PC-3 (cell line): ENCODE measurements at regions of chr4 and their contacts with region 1.

Region 1: DNA sequence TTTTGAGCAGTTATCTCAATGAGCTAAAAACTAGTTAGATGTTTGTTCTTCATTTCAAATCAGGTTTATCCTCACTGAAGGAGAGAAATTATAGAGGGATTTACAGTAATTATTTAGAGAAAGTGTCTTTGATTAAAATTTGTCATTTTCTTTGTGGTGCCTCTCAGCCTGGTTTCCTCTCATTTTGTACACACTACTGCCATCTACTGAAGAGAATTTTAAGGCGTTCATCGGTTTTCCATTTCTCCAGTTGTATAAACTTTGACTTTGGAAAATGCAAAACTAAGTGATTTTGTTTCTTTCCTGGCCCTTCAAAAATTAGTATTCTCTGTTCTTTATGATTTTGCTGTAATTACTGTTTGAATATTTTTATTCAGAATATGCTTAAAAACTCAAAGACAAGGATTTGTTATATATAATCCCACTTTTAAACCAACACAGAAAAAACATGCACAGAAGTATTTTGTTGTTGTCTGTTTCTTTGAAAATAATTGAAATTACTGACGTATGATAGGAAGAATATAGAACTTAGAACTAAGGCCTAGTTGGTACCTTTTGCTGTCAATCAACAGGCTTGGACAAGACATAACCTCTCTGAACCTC is 34.4 kb upstream of the ANXA3 start:
- DNase-seq: peak; percentile 61
- ATAC-seq: no peak; the same call in 1 of the 2 replicates
- H3K4me3 ChIP-seq: no peak overlapping the region
- H3K27ac ChIP-seq: no peak overlapping the region
- H3K4me1 ChIP-seq: no peaks in the 10 kb centered on the region
- H3K27me3 ChIP-seq: no peaks in the 10 kb centered on the region
- CTCF ChIP-seq: peak; percentile 70

Region 2: GRCh38 chr4:77959566-77960338 is 557.4 kb before region 1 on chr4:
- CTCF ChIA-PET with region 1: no interaction called
- POLR2A ChIA-PET with region 1: no interaction called
- intact Hi-C with region 1: loop called (anchors 1 kb)
- DNase-seq: peak; percentile 64
- ATAC-seq: no peak
- H3K4me3 ChIP-seq: no peak overlapping the region
- H3K27ac ChIP-seq: no peak overlapping the region
- H3K4me1 ChIP-seq: no peaks in the 10 kb centered on the region
- H3K27me3 ChIP-seq: no peaks in the 10 kb centered on the region
- CTCF ChIP-seq: peak; percentile 68

Region 3: DNA sequence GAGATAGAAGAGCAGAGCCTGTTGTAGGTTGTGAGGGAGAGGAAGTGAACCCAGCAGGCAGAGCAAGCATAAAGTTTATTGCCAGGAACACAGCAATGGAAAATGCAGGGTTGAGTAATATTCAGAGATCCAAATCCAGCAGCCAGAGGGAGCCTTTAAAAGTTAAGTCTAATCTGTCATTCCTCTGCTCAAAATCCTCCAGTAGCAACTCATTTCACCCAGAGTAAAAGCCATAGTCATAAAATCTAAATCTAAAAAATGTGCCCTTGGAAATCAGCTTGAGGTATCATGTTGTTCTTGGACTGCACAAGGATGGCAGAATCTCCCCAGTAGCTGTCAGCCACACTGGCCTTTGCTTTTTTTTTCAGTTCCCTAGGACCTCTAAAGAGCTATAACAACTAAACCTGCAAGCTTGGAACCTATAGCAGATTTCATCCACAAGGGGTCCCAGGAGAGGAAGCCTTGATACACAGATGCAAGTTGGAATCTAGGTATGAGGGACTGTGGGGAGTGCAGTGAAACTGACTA is 522.9 kb before region 1 on chr4:
- CTCF ChIA-PET with region 1: no interaction called
- POLR2A ChIA-PET with region 1: no interaction called
- intact Hi-C with region 1: loop called (anchors 2 kb)
- DNase-seq: peak; percentile 67
- ATAC-seq: peak; percentile 94
- H3K4me3 ChIP-seq: no peak overlapping the region
- H3K27ac ChIP-seq: no peak overlapping the region
- H3K4me1 ChIP-seq: no peaks in the 10 kb centered on the region
- H3K27me3 ChIP-seq: no peaks in the 10 kb centered on the region
- CTCF ChIP-seq: peak; percentile 69